ENCODE measurements at regions of chr17 and their contacts with region 1.

Region 1: DNA sequence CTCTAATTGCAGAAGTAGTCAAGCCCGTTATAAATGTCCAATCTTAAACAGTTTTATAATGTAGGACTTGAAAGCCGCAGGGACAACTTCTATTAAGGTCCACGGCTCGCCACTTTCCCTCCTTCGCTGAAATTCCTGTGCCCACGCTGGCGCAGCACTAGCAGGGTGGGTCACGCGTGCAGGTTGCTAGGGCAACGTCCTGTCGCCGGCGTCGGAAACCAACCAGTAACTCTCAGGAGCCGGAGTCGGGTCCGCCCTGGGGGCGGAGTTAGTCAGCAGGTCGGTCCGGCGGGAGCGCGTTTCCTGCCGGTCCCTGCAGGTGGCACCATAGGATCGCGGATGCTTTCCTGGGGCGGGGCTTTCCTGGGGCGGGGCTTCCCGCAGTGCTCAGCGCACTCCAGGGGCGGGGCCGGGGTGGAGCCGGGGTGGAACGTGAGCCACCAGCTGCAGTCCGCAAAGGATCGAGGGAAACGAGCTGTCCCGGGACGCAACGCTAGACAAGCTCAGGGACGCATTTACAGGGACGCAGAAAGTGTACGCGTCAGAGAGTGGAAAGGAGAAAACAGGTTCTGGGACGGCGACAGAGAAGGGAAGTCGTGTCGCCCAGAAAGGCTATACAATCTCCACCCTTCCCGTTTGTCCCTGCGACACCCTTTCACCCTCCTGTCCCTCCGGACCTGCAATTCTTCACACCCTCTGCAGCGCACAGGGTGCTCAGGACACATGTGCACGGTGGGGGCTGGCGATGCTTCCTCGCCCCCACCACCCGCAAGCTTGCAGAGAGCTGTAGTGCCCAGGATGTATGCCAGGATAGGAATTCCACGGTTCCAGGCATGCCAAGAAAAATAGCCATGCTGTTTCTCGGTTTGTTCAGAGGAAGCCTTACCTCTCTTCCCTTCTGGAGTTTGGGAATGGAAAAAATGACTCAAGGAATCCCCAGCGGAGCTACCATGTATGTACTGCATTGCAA is 12.4 kb downstream of the COPZ2 start:
- DNase-seq: peak; percentile 96 to 99 (median 98)
- H3K4me3 ChIP-seq: peak overlapping the region; percentile 38
- H3K27ac ChIP-seq: no peak overlapping the region
- H3K4me1 ChIP-seq: peaks cover 13% of the 10 kb centered on the region
- H3K27me3 ChIP-seq: no peaks in the 10 kb centered on the region
- CTCF ChIP-seq: peak; percentile 62 to 91 (median 80)
- EP300 ChIP-seq: no peak
- POLR2A ChIP-seq: no peak

Region 2: DNA sequence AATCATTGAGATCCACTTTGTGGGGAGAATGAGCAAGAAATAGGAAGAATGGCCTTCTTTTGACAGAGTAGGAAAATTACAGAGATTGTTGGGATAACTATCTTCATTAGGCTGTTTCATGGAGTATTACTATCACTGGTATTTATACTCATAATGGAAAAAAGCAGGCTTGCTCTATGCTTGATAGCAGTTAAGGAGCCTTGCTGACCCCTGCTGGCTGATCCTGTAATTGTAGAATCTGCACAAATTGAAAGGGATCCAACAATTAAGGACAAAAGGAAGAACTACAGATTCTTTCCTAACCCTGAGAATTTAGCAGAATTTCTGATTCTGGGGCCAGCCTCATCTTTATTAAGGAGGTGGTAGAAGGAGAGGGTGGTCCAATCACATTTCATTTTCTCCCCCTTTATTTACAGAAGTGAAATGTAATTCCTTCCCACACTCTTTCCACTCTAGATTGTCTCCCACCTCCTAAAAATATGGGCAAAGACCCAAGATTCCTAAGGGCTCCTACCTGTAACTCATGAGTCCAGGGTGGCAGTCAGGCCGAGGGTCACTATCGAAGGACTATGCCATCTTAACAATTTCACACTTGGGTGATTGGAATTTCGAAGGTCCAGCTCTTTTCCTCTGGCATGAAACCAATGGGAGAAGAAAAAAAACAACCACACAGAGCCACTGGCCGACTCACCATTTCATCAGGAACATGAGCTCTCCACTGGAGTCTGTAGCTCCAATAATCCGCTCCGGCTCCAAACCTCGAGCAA is 49.3 kb after region 1 on chr17:
- intact Hi-C with region 1: loop called (anchors 2 kb)
- DNase-seq: peak; percentile 72 to 88 (median 75)
- H3K4me3 ChIP-seq: no peak overlapping the region
- H3K27ac ChIP-seq: no peak overlapping the region
- H3K4me1 ChIP-seq: no peaks in the 10 kb centered on the region
- H3K27me3 ChIP-seq: no peaks in the 10 kb centered on the region
- CTCF ChIP-seq: peak; percentile 82 to 93 (median 89)
- EP300 ChIP-seq: no peak
- POLR2A ChIP-seq: no peak

Region 3: GRCh38 chr17:48093341-48094045 is 68.3 kb after region 1 on chr17:
- intact Hi-C with region 1: no loop called
- DNase-seq: no peak
- H3K4me3 ChIP-seq: no peak overlapping the region
- H3K27ac ChIP-seq: no peak overlapping the region
- H3K4me1 ChIP-seq: no peaks in the 10 kb centered on the region
- H3K27me3 ChIP-seq: no peaks in the 10 kb centered on the region
- CTCF ChIP-seq: no peak
- EP300 ChIP-seq: no peak
- POLR2A ChIP-seq: no peak

Region 4: DNA sequence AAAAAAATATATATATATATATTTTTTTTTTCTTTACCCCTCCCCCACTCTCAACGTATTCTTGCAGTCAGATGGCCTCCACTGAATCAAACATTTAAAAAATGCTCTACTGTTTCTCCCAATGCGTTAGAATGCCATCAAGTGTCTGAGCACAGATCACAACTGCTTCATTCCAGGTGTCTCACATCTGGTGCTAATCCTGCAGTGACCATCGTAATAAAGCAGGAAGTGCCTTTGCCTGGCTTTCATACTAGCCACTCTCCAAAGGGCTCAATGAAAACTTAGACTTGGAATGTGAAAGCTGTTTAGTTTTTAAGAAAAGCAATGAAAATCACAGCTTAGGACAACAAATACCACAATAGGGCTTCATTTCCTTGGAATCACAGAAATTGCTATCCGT is 367.6 kb after region 1 on chr17:
- intact Hi-C with region 1: no loop called
- DNase-seq: no peak
- H3K4me3 ChIP-seq: no peak overlapping the region
- H3K27ac ChIP-seq: no peak overlapping the region
- H3K4me1 ChIP-seq: no peaks in the 10 kb centered on the region
- H3K27me3 ChIP-seq: no peaks in the 10 kb centered on the region
- CTCF ChIP-seq: no peak
- EP300 ChIP-seq: no peak
- POLR2A ChIP-seq: no peak

Measured in ovary (tissue), 10 donors.